ENCODE measurements at regions of chr11 and their contacts with region 1.

Region 1: DNA sequence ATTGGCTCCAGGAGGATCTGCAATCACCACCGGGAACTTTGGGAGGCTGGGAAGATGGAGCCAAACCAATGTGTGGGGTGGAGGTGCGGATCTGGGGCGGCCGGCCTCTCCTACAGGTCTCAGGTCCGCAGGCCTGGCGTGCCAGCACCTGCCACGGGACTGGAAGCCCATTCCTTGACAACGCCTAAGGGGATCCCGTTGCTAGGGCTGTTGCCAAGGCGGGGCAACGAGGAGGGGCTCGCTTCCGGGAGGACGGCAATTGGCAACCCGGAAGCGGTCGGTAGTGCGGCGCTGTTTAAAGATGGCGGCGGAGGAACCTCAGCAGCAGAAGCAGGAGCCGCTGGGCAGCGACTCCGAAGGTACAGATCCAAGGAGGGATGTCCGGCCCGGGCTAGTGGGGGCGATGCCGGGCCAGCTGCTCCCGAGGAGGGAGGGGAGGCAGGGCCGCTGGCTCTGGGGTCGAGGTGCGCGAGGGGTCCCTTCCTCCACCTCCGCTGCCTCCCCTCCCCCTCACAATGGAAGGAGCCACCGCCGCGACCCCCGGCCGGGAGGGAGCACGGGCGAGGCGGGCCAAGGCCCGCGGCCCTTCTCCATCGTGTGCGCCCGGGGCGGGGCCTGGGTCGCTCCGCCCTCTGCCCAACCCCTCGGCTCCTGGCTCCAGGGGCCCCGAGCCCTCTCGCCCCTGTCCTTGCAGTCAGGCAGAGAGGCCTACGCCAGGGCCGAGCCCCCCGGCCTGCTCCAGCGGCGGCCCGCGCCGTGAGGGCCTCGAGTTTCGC is at the start of gene OTUB1:
- DNase-seq: peak; percentile 47
- ATAC-seq: peak; percentile 96
- H3K4me3 ChIP-seq: peak within 1 kb of the TSS; percentile 88
- H3K27ac ChIP-seq: peak within 1 kb of the TSS; percentile 68
- H3K4me1 ChIP-seq: peaks cover 22% of the 10 kb centered on the region
- H3K27me3 ChIP-seq: no peaks in the 10 kb centered on the region
- CTCF ChIP-seq: no peak
- EP300 ChIP-seq: no peak
- POLR2A ChIP-seq: peak; percentile 96
- RAD21 ChIP-seq: no peak
- polyA plus RNA-seq, gene OTUB1: 125 to 225 TPM

Region 2: DNA sequence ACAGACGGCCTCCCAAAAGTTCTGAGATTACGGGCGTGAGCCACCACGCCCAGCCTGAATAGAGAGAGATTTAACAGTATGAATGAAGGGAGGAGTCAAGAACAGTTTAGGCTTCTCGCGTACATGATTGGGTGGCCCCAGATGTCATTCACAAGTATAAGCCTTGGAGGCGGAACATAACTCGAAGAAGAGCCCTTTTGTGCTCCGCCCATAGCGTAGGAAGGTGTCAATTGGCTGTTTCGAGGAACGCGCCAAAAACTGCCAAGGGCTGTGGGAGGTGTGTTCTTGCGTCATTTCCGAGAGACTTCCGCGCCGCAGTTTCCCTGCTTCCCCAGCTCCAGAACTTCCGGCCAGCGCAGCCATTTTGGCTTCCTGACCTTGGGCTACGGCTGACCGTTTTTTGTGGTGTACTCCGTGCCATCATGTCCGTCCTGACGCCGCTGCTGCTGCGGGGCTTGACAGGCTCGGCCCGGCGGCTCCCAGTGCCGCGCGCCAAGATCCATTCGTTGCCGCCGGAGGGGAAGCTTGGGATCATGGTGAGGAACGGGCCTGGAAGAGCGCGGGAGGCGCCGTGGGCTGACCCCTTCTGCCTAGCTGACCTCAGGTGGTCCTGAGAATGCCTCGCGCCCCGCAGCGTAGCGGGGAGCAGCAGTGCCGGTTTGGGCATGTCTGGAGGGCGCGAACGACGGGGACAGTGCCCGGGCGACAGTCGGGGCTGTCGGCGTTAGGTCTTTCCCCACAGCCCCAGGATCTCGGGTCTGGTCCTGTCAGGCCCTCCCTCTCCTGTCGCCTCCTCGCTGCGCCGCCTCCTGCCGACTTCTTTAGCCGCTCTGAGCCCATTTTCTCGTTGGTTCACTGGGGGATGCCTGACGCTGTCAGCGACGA is 11.8 kb before region 1 on chr11 and contains the start of gene COX8A:
- CTCF ChIA-PET with region 1: no interaction called
- POLR2A ChIA-PET with region 1: interaction called, 11 read pairs
- RAD21 ChIA-PET with region 1: interaction called, 3 read pairs
- SMC1A ChIA-PET with region 1: no interaction called
- in situ Hi-C with region 1: no loop called
- intact Hi-C with region 1: no loop called
- DNase-seq: peak; percentile 99
- ATAC-seq: peak; percentile 98
- H3K4me3 ChIP-seq: peak within 1 kb of the TSS; percentile 100
- H3K27ac ChIP-seq: peak within 1 kb of the TSS; percentile 96
- H3K4me1 ChIP-seq: peaks cover 8% of the 10 kb centered on the region
- H3K27me3 ChIP-seq: no peaks in the 10 kb centered on the region
- CTCF ChIP-seq: no peak
- EP300 ChIP-seq: no peak
- POLR2A ChIP-seq: peak; percentile 94
- RAD21 ChIP-seq: no peak
- polyA plus RNA-seq, gene COX8A: 387 to 457 TPM

Region 3: DNA sequence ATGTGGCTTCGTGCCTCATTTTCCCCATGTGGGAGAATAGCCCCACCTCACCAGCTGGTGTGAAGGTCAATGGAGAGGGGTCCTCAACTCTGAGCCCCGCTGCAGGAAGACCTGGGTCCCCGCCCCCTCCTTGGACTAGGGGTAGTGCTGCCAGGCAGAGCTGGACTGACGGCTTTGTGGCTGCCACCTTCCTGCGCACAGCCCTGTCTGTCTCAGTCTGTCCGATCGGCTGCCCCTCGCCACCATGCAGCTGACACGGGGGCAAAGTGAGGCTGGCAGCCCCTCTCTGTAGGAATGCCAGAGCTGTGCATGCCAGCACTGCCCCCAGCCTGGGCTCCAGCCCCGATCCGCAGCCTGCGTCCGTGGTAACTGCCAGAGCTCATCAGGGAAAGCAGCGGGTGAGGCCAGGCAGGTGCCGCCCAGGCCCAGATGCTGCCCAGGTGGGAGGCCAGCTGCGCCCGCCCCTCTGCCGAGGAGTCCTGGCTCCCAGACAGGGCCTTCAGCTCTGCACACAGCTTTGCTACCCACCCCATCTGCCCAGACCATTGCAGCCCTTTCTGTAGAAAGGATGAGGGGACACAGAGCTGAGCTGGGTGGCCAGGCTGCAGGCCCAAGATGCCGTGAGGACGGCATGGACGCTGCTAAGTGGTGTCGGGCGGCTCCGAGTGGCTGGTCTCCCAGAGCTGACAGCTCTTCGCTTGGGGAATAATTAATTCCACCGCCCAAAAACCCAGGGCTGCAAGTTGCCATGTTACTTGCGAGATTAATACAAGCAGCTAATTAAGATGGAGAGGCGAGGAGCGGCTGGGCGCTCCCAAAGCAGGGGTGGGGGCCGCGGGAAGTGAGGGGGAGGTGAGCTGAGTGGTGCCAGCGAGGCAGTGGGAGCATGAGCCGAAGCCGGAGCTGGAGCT is 29.8 kb after region 1 on chr11:
- CTCF ChIA-PET with region 1: no interaction called
- POLR2A ChIA-PET with region 1: no interaction called
- RAD21 ChIA-PET with region 1: no interaction called
- SMC1A ChIA-PET with region 1: no interaction called
- in situ Hi-C with region 1: no loop called
- intact Hi-C with region 1: no loop called
- DNase-seq: no peak
- ATAC-seq: no peak
- H3K4me3 ChIP-seq: no peak overlapping the region
- H3K27ac ChIP-seq: no peak overlapping the region
- H3K4me1 ChIP-seq: no peaks in the 10 kb centered on the region
- H3K27me3 ChIP-seq: no peaks in the 10 kb centered on the region; a peak in 1 of 4 replicates
- CTCF ChIP-seq: no peak
- EP300 ChIP-seq: no peak
- POLR2A ChIP-seq: no peak
- RAD21 ChIP-seq: no peak

Region 4: DNA sequence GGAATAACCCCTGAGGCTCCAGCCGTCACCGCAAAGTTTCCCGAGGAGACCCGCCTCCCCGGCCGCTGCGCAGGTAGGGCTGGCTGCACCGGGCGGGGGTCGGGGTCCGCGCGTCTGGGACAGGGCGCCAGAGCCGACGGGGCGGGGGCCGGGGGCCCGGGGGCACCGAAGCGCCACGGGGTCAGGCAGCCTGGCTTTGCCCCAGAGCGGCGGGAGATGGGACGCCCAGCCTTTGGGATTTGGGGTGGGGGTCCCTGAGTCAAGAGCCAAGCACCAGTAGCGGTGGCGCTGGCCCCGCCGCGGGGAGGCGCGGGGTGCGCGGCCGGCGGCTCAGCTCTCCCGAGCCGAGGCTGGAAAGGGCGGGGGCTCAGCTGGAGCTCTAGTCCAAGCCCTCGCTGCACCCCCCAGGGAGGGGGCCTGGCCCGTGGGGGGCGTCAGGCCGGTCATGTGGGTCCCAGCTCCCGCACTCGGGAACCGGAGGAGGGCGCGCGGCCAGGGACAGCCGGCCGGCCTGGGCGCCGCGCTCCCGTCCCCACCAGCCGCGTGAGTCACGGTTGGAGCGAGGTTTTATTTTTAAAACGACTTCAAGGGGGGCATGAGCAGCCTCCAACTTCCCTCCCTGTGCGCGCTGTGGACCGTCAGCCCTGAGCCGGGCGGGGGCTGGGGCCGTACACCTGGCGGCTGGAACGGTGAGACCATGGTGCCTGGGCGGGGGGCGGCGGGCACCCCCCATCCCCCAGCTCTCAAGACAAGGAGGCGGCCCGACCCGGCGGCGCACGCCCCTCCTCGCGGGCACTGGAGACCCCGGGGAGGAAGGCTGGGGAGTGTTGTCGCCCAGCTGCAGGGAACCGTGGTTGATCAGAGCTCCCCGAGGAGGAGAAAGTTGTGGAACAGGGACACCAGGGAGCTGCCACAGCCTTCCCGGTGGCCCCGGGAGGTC is 50.0 kb after region 1 on chr11:
- CTCF ChIA-PET with region 1: no interaction called
- POLR2A ChIA-PET with region 1: no interaction called
- RAD21 ChIA-PET with region 1: no interaction called
- SMC1A ChIA-PET with region 1: no interaction called
- in situ Hi-C with region 1: no loop called
- intact Hi-C with region 1: no loop called
- DNase-seq: no peak
- ATAC-seq: no peak
- H3K4me3 ChIP-seq: no peak overlapping the region
- H3K27ac ChIP-seq: no peak overlapping the region
- H3K4me1 ChIP-seq: no peaks in the 10 kb centered on the region
- H3K27me3 ChIP-seq: peaks cover 0 to 10% of the 10 kb centered on the region in 2 experiments; a peak in 3 of 4 replicates
- CTCF ChIP-seq: no peak
- EP300 ChIP-seq: no peak
- POLR2A ChIP-seq: no peak
- RAD21 ChIP-seq: no peak

Measured in GM12878 (cell line).